B cell (primary cell): ENCODE measurements at regions of chr12 and their contacts with region 1.

Region 1: DNA sequence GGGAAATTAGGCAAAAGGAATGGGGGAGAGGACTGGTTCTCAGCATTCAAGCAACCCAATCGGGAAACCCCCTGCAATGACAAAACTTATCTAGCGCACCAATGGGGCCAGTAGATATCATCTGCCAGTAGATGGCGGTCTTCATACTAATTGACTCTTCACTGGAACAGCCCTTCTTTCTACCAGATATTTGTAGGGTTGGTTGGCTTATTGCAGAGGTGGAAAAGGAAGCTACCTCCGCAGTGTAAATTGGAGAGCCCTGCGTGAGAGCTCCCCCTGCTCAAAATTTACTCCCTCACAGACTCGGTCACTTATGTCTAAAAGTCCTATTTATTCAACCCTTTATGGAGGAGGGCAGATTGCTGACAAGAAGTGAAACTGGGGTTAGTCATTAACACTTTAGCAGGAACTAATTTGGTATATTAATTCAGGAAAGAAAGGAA is 166.1 kb upstream of the CCND2 start:
- DNase-seq: peak; percentile 92
- ATAC-seq: peak; percentile 97
- H3K4me3 ChIP-seq: no peak overlapping the region
- H3K4me3 Mint-ChIP-seq: peak overlapping the region; percentile 9
- H3K27ac ChIP-seq: no peak overlapping the region
- H3K27ac Mint-ChIP-seq: peak overlapping the region; percentile 1
- H3K4me1 ChIP-seq: peaks cover 6 to 8% of the 10 kb centered on the region in 2 donors
- H3K4me1 Mint-ChIP-seq: peaks cover 8% of the 10 kb centered on the region
- H3K27me3 ChIP-seq: peaks cover 0 to 6% (median 0%) of the 10 kb centered on the region in 4 experiments
- H3K27me3 Mint-ChIP-seq: peaks cover 7% of the 10 kb centered on the region
- CTCF ChIP-seq: peak; percentile 81

Region 2: GRCh38 chr12:3432176-3432742 is 675.2 kb before region 1 on chr12:
- CTCF ChIA-PET with region 1: no interaction called
- POLR2A ChIA-PET with region 1: no interaction called
- intact Hi-C with region 1: no loop called
- DNase-seq: no peak
- ATAC-seq: no peak
- H3K4me3 ChIP-seq: no peak overlapping the region
- H3K4me3 Mint-ChIP-seq: no peak overlapping the region
- H3K27ac ChIP-seq: no peak overlapping the region
- H3K27ac Mint-ChIP-seq: no peak overlapping the region
- H3K4me1 ChIP-seq: no peaks in the 10 kb centered on the region
- H3K4me1 Mint-ChIP-seq: peaks cover 8% of the 10 kb centered on the region
- H3K27me3 ChIP-seq: peaks cover 0 to 3% (median under 1%) of the 10 kb centered on the region in 4 experiments
- H3K27me3 Mint-ChIP-seq: peaks cover 23% of the 10 kb centered on the region
- CTCF ChIP-seq: no peak

Region 3: DNA sequence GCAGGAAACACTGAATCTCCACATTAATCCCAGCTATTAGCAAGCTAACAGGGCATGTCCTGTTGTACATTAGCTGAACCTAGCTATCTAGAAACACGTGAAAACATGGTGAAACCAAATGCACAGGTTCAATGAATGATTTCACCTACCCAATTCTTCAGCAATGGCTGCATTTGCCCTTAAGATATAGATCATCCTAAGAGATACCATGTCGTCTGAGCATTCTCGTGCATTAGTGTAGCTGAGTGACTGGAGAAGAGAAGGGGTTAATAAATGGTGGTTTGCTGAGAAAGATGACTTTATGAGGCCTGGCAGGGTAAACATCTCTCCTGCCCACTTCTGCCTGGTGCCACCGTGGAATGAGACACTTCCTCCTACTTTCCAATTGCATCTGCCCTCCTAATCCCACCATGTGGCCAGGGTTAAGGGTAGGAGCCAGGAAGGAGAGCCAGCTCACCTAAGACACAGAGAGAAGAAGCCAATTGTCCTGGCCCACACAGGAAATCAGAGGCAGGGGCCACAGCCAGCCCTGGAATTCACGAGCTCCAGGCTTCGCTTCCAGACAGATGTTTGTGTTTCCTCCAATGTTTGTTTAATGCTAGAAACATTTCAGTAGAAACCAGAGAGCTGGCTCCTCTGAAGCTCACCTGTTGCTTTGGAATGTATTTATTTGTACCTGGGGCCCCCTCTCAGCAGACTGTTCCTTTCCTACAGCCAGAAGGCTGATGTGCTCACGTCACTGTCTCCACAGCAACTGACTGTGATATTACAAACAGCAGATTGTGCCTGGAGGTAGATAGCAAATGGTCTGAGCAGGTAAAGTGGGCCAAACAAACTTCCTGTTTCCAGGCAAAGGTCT is 108.3 kb before region 1 on chr12:
- CTCF ChIA-PET with region 1: interaction called, 9 read pairs
- POLR2A ChIA-PET with region 1: interaction called, 7 read pairs
- intact Hi-C with region 1: loop called (anchors 1 kb)
- DNase-seq: no peak
- ATAC-seq: no peak
- H3K4me3 ChIP-seq: no peak overlapping the region
- H3K4me3 Mint-ChIP-seq: no peak overlapping the region
- H3K27ac ChIP-seq: no peak overlapping the region
- H3K27ac Mint-ChIP-seq: no peak overlapping the region
- H3K4me1 ChIP-seq: peaks cover 4 to 7% of the 10 kb centered on the region in 2 donors
- H3K4me1 Mint-ChIP-seq: peaks cover 4% of the 10 kb centered on the region
- H3K27me3 ChIP-seq: peaks cover 0 to 3% (median under 1%) of the 10 kb centered on the region in 4 experiments
- H3K27me3 Mint-ChIP-seq: peaks cover 4% of the 10 kb centered on the region
- CTCF ChIP-seq: no peak

Region 4: DNA sequence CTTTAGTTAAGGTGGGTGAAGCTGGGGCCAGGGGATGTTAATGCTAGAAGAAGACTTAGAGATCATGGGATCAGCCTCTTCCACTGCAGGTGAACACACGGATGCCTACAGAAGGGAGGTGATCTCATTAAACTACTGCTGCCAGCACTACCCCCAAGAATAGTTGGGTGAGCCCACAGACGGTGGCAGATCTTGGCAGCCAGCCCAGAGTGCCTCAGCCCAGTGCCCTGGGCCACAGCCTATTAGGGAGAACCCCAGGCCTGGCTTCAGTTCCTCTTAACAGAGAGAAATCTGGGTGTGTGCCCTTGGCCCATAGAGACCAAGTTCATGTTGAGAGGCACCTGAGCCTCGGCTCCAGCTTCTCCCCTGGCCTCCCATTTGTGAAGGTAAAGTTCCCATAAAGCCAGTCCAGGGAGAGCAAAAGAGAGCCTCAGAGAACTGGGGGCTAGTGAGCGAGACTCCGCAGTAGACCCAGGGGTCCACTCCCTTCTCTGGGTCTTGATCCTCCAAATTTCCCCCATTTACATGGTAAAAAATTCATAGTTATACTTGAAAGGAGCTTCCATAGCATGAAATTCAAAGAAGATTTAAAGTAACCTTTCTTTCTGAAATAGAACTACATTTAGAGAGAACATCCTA is 41.1 kb after region 1 on chr12:
- CTCF ChIA-PET with region 1: interaction called, 9 read pairs
- POLR2A ChIA-PET with region 1: no interaction called
- intact Hi-C with region 1: loop called (anchors 2 kb)
- DNase-seq: peak; percentile 96
- ATAC-seq: peak; percentile 89
- H3K4me3 ChIP-seq: peak overlapping the region in 1 of 5 experiments; percentile 6
- H3K4me3 Mint-ChIP-seq: peak overlapping the region; percentile 84
- H3K27ac ChIP-seq: peak overlapping the region; percentile 80 to 90
- H3K27ac Mint-ChIP-seq: peak overlapping the region; percentile 91
- H3K4me1 ChIP-seq: peaks cover 73 to 88% of the 10 kb centered on the region in 2 donors
- H3K4me1 Mint-ChIP-seq: peaks cover 90% of the 10 kb centered on the region
- H3K27me3 ChIP-seq: no peaks in the 10 kb centered on the region
- H3K27me3 Mint-ChIP-seq: no peaks in the 10 kb centered on the region
- CTCF ChIP-seq: no peak

Region 5: DNA sequence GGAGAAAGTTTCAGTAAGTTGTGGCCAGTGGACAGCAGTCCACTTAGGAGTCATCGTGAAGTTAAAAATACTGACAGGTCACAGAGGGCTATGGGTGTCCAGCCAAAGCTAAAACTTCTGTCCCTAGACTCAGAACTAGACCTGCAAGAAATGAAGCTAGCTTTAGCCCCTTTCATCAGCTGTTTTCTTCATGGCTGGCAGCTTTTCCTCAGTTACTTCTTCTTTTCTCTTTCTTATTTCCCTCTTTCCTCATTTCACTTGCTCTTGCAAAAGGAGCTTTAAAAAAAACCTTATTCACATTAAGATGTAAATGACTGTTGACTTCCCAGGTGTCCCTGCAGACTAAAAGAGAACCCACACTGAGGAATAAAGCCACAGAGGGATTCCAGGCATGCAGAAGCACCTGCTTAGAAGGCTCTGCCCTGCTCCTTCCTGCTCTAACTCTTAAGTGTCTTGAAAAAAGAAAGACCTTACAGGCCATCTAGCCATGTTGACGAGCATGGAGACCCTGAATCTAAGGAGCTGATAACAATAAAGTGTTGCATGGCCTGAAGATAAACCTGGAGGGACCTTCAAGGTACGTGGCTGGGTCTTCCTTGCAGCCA is 96.4 kb after region 1 on chr12:
- CTCF ChIA-PET with region 1: interaction called, 3 read pairs
- POLR2A ChIA-PET with region 1: no interaction called
- intact Hi-C with region 1: loop called (anchors 5 kb)
- DNase-seq: peak; percentile 50
- ATAC-seq: no peak
- H3K4me3 ChIP-seq: no peak overlapping the region
- H3K4me3 Mint-ChIP-seq: peak overlapping the region; percentile 50
- H3K27ac ChIP-seq: no peak overlapping the region
- H3K27ac Mint-ChIP-seq: peak overlapping the region; percentile 53
- H3K4me1 ChIP-seq: peaks cover 52 to 54% of the 10 kb centered on the region in 2 donors
- H3K4me1 Mint-ChIP-seq: peaks cover 58% of the 10 kb centered on the region
- H3K27me3 ChIP-seq: no peaks in the 10 kb centered on the region
- H3K27me3 Mint-ChIP-seq: no peaks in the 10 kb centered on the region
- CTCF ChIP-seq: no peak

Region 6: GRCh38 chr12:4221258-4221620 is 113.8 kb after region 1 on chr12:
- CTCF ChIA-PET with region 1: interaction called, 10 read pairs
- POLR2A ChIA-PET with region 1: no interaction called
- intact Hi-C with region 1: loop called (anchors 1 kb)
- DNase-seq: no peak
- ATAC-seq: no peak
- H3K4me3 ChIP-seq: no peak overlapping the region
- H3K4me3 Mint-ChIP-seq: no peak overlapping the region
- H3K27ac ChIP-seq: no peak overlapping the region
- H3K27ac Mint-ChIP-seq: no peak overlapping the region
- H3K4me1 ChIP-seq: peaks cover 35 to 42% of the 10 kb centered on the region in 2 donors
- H3K4me1 Mint-ChIP-seq: peaks cover 50% of the 10 kb centered on the region
- H3K27me3 ChIP-seq: no peaks in the 10 kb centered on the region
- H3K27me3 Mint-ChIP-seq: no peaks in the 10 kb centered on the region
- CTCF ChIP-seq: no peak